Colonic mucosa (tissue), 4 donors: ENCODE measurements at regions of chr12 and their contacts with region 1.

Region 1: GRCh38 chr12:47742253-47742825 is 16.3 kb downstream of the RAPGEF3 start:
- DNase-seq: peak; percentile 80
- H3K4me3 ChIP-seq: no peak overlapping the region
- H3K27ac ChIP-seq: no peak overlapping the region
- H3K4me1 ChIP-seq: peaks cover 6% of the 10 kb centered on the region
- H3K27me3 ChIP-seq: no peaks in the 10 kb centered on the region
- CTCF ChIP-seq: peak; percentile 98

Region 2: DNA sequence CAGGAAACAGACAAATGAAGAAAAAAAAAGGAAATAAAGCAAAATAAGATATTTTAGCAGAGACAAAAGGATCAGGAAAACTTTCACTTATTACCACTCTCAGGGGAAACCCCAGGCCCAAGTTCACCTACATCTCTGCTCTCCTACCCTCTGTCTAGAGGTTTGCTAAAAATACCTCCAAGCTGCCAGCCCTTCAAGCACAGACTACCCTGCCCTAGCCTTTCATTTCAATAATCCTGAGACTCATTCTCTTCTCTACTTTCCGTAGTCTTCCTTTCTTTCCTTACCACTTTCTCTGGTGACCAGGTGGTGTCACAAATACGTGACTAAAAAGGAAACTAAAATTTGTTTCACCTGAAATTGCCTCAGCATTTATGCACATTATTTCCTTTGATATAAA is 70.3 kb before region 1 on chr12:
- intact Hi-C with region 1: no loop called
- DNase-seq: no peak
- H3K4me3 ChIP-seq: no peak overlapping the region
- H3K27ac ChIP-seq: no peak overlapping the region
- H3K4me1 ChIP-seq: no peaks in the 10 kb centered on the region
- H3K27me3 ChIP-seq: no peaks in the 10 kb centered on the region
- CTCF ChIP-seq: no peak

Region 3: DNA sequence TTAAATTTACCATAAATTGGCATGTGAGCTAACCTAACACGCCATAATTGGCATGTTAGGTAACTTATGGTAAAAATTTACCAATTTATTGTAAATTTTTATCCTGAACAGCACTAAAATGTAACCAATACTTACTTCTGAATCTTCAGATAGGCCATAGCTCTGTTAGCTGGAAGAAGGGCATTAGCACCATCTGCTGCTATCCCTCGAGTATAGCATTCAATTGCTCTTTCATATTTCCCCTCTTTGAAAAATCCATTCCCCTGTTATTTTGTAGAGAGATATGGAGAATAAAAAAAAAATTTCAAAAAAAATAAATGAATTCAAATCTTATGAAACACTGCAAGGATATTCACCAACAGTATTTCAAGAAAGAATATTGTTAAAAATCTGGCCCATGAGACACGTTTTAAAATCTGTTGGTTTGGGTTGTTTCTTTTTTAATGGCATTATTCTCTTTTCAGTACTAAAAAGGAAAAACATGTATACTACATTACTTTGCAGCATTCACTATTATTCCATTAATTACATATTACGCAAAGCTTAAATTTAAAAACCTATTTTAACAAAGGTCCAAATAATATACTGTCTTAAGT is 55.6 kb before region 1 on chr12:
- intact Hi-C with region 1: no loop called
- DNase-seq: no peak
- H3K4me3 ChIP-seq: no peak overlapping the region
- H3K27ac ChIP-seq: no peak overlapping the region
- H3K4me1 ChIP-seq: no peaks in the 10 kb centered on the region
- H3K27me3 ChIP-seq: no peaks in the 10 kb centered on the region
- CTCF ChIP-seq: peak; percentile 37

Region 4: GRCh38 chr12:47767216-47767724 is 24.9 kb after region 1 on chr12:
- intact Hi-C with region 1: loop called (anchors 2 kb)
- DNase-seq: peak; percentile 77
- H3K4me3 ChIP-seq: no peak overlapping the region
- H3K27ac ChIP-seq: no peak overlapping the region
- H3K4me1 ChIP-seq: no peaks in the 10 kb centered on the region
- H3K27me3 ChIP-seq: no peaks in the 10 kb centered on the region
- CTCF ChIP-seq: peak; percentile 56

Region 5: GRCh38 chr12:47779301-47779942 is 37.1 kb after region 1 on chr12:
- intact Hi-C with region 1: loop called (anchors 2 kb)
- DNase-seq: peak; percentile 93
- H3K4me3 ChIP-seq: no peak overlapping the region
- H3K27ac ChIP-seq: no peak overlapping the region
- H3K4me1 ChIP-seq: no peaks in the 10 kb centered on the region
- H3K27me3 ChIP-seq: no peaks in the 10 kb centered on the region
- CTCF ChIP-seq: peak; percentile 94

Region 6: DNA sequence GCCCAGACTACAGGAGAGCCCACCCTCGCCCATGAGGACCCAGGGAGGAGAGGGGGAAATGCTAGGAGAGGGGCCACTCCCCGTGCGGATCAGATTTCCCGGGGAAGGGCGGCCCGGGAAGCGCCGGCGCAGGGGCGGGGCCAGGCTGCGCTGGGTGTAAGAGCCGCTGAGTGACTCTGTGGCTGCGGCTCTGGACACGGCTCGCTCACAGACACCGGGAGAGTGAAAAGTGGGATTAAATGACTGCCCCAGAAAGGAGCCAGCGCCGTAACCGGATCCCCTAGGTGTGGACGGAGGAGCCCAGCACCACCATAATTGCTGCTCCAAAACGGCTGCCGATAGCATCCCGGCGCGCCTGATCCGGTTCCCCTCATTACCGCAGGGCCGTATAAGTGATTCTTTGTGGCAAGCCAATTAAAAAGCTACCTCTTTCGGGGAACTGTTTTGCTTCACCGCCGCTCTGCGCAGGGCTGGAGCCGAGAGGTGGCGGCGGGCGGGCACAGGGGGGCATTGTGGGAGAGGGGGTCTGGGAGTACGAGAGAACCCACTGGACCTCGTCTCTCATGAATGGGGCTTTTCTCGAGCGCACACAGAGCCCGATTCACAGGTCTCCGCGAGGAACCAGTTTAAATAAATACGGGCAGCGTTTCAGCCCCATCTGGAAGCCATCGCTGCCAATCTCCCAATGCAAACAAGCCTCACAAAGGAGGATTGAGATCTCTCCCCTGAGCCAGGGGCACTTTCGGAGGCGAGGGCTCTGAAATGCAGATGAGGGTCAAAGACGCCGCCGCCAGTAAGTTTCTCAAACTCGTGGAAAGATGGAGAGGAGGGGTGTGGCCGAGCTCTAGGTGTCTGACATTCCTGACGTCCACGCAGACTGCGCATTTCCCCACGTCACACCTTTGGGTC is 259.4 kb after region 1 on chr12:
- intact Hi-C with region 1: no loop called
- DNase-seq: peak; percentile 69
- H3K4me3 ChIP-seq: peak overlapping the region; percentile 33
- H3K27ac ChIP-seq: no peak overlapping the region
- H3K4me1 ChIP-seq: peaks cover 28% of the 10 kb centered on the region
- H3K27me3 ChIP-seq: peaks cover 60% of the 10 kb centered on the region
- CTCF ChIP-seq: no peak